ENCODE measurements at regions of chr18 and their contacts with region 1.

Region 1: DNA sequence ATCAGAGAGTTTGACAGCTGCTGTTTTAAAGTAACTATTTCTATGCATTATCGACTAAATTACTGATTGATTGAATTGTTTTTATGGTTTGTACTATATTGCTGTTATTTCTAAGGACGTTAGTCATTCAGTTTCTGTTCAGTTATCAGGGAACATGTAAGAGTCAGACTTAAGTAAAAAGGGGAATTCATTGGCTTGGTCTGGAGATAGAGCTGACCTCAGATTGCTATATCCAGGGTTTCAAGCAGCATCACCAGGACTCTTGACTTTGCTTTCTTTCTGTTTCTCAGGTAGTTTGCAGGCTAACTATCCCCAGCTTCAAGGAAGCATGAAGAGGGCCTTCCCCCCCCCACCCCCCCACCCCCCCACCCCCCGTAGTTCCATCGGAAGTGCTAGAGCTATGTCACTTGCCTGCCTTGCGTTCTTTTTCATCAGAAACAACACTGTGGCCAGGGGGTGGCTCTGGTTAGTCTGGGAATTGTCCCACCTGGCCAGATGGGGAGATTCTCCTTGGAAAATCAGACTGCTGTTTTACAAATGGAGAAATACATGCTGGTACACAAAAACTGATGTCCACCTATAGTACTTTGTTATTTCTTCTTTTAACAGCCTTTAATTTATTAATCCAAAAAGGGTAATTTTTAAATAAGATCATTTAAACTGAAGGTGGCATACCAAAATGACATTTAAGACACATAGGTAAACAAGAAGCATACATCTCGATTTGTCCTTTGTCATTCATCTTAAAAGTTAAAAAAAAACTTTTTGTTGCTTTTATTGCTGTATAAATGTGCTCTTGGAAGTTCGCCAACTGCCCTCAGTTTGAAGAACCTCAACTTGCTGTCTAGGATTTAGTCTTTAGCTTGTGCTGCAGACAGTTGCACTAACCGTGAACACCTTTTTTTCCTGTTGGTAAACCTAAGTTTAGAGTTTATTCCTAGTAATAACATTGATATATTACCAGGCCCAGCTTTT is 9.4 kb downstream of the SMAD4 start:
- DNase-seq: no peak
- ATAC-seq: peak; percentile 51
- H3K4me3 Mint-ChIP-seq: no peak overlapping the region
- H3K27ac Mint-ChIP-seq: peak overlapping the region; percentile 66
- H3K4me1 Mint-ChIP-seq: peaks cover 81% of the 10 kb centered on the region
- H3K27me3 Mint-ChIP-seq: no peaks in the 10 kb centered on the region
- CTCF ChIP-seq: no peak

Region 2: GRCh38 chr18:50836521-50836957 is 202.9 kb before region 1 on chr18:
- CTCF ChIA-PET with region 1: no interaction called
- POLR2A ChIA-PET with region 1: no interaction called
- intact Hi-C with region 1: no loop called
- DNase-seq: no peak
- ATAC-seq: no peak
- H3K4me3 Mint-ChIP-seq: no peak overlapping the region
- H3K27ac Mint-ChIP-seq: no peak overlapping the region
- H3K4me1 Mint-ChIP-seq: peaks cover 3% of the 10 kb centered on the region
- H3K27me3 Mint-ChIP-seq: peaks cover 5% of the 10 kb centered on the region
- CTCF ChIP-seq: no peak

Region 3: DNA sequence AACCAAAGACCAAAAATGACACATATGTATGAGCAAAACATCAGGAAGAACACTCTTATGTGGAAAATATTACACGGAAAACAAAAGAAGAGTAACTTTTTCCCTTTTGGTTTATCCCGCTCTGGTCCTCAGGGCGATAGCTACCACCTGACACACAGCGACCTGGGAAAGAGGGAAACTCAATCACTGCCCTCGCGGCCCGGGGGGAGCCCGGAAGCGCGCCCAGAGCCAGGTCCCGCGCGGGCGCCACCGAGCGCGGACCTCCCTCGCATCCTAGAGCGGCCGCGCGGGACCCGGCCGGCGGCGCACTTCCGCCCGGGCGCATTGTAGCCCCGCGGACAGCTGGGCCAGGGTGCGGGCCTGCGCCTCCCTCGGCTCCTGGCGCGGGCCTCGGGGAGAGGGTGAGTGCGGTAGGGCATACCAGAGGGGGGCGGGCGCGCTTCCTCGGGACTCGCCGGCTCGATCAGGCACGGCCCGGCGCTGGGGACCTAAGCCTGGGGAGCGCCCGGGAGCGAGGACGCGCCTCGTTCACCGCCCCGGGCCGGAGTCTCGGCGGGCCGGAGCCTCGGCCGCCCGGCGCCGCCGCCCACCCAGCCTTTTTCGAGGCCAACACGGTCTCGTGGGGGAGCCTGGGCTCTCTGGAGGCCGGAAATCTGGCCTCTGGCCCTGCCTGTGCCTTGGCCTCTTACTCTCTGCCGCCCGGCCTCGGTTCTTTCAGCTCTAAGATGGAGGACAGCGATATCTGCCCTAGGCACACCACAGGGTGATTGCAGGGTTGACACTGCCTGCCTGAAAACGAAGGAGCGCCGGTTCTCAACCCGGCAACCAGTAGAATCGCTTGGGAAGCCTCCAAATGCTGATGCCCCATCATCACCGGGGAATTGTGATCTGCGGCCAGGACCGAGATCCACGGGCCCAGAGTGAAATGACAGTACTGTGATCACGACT is 71.4 kb before region 1 on chr18 and contains the start of gene ELAC1:
- CTCF ChIA-PET with region 1: no interaction called
- POLR2A ChIA-PET with region 1: interaction called, 6 read pairs
- intact Hi-C with region 1: loop called (anchors 5 kb)
- DNase-seq: peak; percentile 65
- ATAC-seq: peak; percentile 95
- H3K4me3 Mint-ChIP-seq: peak within 1 kb of the TSS; percentile 84
- H3K27ac Mint-ChIP-seq: peak within 1 kb of the TSS; percentile 94
- H3K4me1 Mint-ChIP-seq: peaks cover 24% of the 10 kb centered on the region
- H3K27me3 Mint-ChIP-seq: no peaks in the 10 kb centered on the region
- CTCF ChIP-seq: no peak
- total RNA-seq, gene ELAC1: 5.1 to 5.4 TPM

Region 4: GRCh38 chr18:51016903-51017879 is 22.2 kb before region 1 on chr18:
- CTCF ChIA-PET with region 1: no interaction called
- POLR2A ChIA-PET with region 1: no interaction called
- intact Hi-C with region 1: no loop called
- DNase-seq: no peak
- ATAC-seq: no peak
- H3K4me3 Mint-ChIP-seq: no peak overlapping the region
- H3K27ac Mint-ChIP-seq: no peak overlapping the region
- H3K4me1 Mint-ChIP-seq: no peaks in the 10 kb centered on the region
- H3K27me3 Mint-ChIP-seq: no peaks in the 10 kb centered on the region
- CTCF ChIP-seq: no peak

Region 5: DNA sequence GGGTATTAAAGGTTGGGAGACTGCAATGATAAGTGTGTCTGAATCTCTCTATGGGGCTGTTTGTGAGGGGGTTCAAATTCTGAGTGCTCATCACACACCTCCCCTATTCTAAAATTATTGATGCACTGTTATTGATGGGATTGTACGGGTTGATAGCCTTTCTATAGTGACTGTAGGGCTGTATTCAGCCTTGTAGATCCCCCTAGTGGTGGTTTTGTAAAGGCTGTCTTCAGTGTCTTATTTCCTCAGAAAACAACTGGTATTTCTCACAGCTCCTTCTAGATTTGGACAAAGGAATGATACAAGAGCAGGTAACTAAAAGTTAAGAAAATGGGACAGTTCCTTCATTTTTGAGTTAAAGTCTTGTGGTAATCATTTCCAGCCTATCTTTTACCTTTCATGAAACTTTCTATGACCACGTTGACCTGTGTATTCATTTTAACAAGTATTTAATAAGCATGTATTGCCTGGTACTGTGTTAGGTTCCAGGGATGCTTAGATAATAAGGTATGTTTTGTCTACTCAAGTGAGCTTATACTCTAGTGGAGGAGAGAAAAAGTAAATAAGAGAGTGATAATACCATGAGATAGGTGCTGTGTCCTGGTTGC is 11.8 kb after region 1 on chr18:
- CTCF ChIA-PET with region 1: interaction called, 55 read pairs
- POLR2A ChIA-PET with region 1: interaction called, 3 read pairs
- intact Hi-C with region 1: no loop called
- DNase-seq: no peak
- ATAC-seq: peak; percentile 90
- H3K4me3 Mint-ChIP-seq: no peak overlapping the region
- H3K27ac Mint-ChIP-seq: no peak overlapping the region
- H3K4me1 Mint-ChIP-seq: peaks cover 38% of the 10 kb centered on the region
- H3K27me3 Mint-ChIP-seq: no peaks in the 10 kb centered on the region
- CTCF ChIP-seq: peak; percentile 78

Region 6: DNA sequence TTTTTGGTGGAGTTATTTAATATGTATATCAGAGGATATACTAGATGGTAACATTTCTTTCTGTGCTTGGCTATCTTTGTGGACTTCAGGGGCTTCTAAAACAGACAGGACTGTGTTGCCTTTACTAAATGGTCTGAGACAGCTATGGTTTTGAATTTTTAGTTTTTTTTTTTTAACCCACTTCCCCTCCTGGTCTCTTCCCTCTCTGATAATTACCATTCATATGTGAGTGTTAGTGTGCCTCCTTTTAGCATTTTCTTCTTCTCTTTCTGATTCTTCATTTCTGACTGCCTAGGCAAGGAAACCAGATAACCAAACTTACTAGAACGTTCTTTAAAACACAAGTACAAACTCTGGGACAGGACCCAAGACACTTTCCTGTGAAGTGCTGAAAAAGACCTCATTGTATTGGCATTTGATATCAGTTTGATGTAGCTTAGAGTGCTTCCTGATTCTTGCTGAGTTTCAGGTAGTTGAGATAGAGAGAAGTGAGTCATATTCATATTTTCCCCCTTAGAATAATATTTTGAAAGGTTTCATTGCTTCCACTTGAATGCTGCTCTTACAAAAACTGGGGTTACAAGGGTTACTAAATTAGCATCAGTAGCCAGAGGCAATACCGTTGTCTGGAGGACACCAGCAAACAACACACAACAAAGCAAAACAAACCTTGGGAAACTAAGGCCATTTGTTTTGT is 43.3 kb after region 1 on chr18:
- CTCF ChIA-PET with region 1: interaction called, 3 read pairs
- POLR2A ChIA-PET with region 1: no interaction called
- intact Hi-C with region 1: loop called (anchors 5 kb)
- DNase-seq: no peak
- ATAC-seq: peak; percentile 88
- H3K4me3 Mint-ChIP-seq: peak overlapping the region; percentile 15
- H3K27ac Mint-ChIP-seq: peak overlapping the region; percentile 95
- H3K4me1 Mint-ChIP-seq: peaks cover 23% of the 10 kb centered on the region
- H3K27me3 Mint-ChIP-seq: no peaks in the 10 kb centered on the region
- CTCF ChIP-seq: no peak